Activated T-helper 2 cell treated with anti-CD3 and anti-CD28 coated beads, Interferon-gamma antibody, Interleukin-2, Interleukin-4, amounts not matched to agents 10 μg/mL and 5 μg/mL and 100 μg/mL, durations not matched to agents 14 hours and 24 hours and 36 hours (primary cell): ENCODE measurements at regions of chr13 and their contacts with region 1.

Region 1: GRCh38 chr13:98476538-98476966 is 100.4 kb downstream of the STK24 start:
- DNase-seq: peak; percentile 87
- H3K4me3 Mint-ChIP-seq: peak overlapping the region; percentile 72
- H3K27ac Mint-ChIP-seq: peak overlapping the region; percentile 92
- H3K4me1 Mint-ChIP-seq: peaks cover 63% of the 10 kb centered on the region
- H3K27me3 Mint-ChIP-seq: no peaks in the 10 kb centered on the region

Region 2: GRCh38 chr13:98517576-98518310 is 41.2 kb after region 1 on chr13:
- intact Hi-C with region 1: loop called (anchors 1 kb)
- DNase-seq: no peak
- H3K4me3 Mint-ChIP-seq: peak overlapping the region; percentile 22
- H3K27ac Mint-ChIP-seq: peak overlapping the region; percentile 93
- H3K4me1 Mint-ChIP-seq: peaks cover 78% of the 10 kb centered on the region
- H3K27me3 Mint-ChIP-seq: no peaks in the 10 kb centered on the region

Region 3: GRCh38 chr13:98576963-98577822 is 100.6 kb after region 1 on chr13 and contains the start of gene STK24:
- intact Hi-C with region 1: loop called (anchors 1 kb)
- DNase-seq: peak; percentile 60
- H3K4me3 Mint-ChIP-seq: peak within 1 kb of the TSS; percentile 98
- H3K27ac Mint-ChIP-seq: peak within 1 kb of the TSS; percentile 95
- H3K4me1 Mint-ChIP-seq: peaks cover 36% of the 10 kb centered on the region
- H3K27me3 Mint-ChIP-seq: no peaks in the 10 kb centered on the region
- total RNA-seq, gene STK24: 119 and 127 TPM in 2 replicates

Region 4: DNA sequence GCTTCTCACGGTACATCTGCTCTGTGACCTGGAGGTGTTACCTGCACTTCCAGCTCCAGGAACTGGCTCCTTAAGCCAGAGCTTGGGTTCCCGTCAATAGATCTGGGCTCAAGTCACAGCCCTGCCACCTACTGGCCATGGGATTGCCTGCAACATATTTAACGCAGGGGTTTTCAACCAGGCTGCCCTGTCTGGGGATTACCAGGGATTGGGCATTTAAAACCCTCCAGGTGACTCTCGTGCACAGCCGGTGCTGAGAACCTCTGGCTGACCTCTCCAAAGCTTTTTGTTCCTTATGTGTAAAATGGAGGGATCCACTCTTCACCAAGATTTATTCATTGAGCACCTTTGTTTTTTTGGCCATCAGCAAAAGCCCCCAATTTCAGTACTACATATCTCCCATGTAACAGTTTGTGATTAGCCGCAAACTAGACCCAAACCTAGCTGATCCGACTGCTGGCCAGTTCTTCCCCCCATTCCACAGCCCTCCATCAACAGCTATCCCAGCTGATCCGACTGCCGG is 177.0 kb after region 1 on chr13:
- intact Hi-C with region 1: loop called (anchors 2 kb)
- DNase-seq: peak; percentile 51
- H3K4me3 Mint-ChIP-seq: no peak overlapping the region
- H3K27ac Mint-ChIP-seq: no peak overlapping the region
- H3K4me1 Mint-ChIP-seq: peaks cover 2% of the 10 kb centered on the region
- H3K27me3 Mint-ChIP-seq: no peaks in the 10 kb centered on the region

Region 5: DNA sequence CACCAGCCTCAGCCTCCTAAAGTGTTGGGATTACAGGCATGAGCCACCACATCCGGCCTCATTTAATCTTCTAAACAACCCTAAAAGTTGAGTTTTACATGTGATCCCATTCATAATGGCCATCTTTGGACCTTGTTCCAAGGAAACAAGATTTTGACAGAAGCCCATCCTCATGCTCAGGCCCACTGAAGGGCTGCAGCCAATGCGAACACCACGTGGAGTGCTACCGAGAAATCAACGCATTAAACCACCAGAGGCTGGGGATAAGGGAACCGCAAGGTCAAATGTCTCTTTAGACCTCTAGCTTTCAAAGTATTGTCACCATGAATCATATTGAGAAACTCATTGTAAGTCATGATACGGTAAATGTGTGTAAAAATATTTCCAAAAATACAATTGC is 550.7 kb after region 1 on chr13:
- intact Hi-C with region 1: loop called (anchors 1 kb)
- DNase-seq: no peak
- H3K4me3 Mint-ChIP-seq: peak overlapping the region; percentile 48
- H3K27ac Mint-ChIP-seq: peak overlapping the region; percentile 89
- H3K4me1 Mint-ChIP-seq: peaks cover 75% of the 10 kb centered on the region
- H3K27me3 Mint-ChIP-seq: no peaks in the 10 kb centered on the region